ENCODE measurements at regions of chrX and their contacts with region 1.

Region 1: DNA sequence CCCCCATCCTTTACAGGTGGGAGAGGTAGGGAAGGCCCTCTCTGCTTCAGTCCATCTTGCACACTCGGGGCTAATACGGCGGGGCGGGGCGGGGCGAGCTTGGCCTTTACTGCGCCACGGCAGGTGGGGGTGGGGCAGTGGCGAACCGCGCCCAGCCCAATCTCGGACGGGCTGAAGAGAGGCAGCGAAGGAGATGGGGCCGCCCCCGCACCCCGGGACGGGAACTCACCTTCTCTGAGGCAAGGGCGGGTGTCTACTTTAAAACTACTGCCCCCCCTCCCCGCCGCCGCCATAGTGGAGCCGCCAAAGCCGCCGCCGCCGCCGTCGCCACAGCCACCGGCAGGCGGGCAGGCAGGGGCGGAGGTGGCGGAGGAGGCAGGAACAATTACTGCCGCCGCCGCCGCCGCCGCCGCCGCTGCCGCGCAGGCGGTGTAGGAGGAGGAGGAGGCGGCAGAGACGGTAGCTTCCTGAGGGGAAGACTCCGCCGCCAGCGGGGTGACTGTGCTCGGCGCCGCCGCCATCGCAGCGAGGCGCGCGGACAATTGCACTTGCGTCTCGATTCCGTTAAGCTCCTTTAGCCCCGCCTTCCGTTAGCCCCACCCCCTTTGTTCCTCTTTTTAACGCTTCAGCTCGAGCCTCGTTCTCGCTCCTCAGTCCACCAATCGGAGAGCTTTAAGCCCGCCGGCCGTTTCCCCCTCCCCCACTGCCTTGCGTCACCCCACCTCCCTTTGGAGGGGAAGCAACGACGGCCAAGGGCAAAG is at the start of gene ZMAT1:
- H3K4me3 Mint-ChIP-seq: peak within 1 kb of the TSS; percentile 76
- H3K27ac Mint-ChIP-seq: peak within 1 kb of the TSS; percentile 77
- H3K4me1 Mint-ChIP-seq: peaks cover 8% of the 10 kb centered on the region
- H3K27me3 Mint-ChIP-seq: no peaks in the 10 kb centered on the region

Region 2: DNA sequence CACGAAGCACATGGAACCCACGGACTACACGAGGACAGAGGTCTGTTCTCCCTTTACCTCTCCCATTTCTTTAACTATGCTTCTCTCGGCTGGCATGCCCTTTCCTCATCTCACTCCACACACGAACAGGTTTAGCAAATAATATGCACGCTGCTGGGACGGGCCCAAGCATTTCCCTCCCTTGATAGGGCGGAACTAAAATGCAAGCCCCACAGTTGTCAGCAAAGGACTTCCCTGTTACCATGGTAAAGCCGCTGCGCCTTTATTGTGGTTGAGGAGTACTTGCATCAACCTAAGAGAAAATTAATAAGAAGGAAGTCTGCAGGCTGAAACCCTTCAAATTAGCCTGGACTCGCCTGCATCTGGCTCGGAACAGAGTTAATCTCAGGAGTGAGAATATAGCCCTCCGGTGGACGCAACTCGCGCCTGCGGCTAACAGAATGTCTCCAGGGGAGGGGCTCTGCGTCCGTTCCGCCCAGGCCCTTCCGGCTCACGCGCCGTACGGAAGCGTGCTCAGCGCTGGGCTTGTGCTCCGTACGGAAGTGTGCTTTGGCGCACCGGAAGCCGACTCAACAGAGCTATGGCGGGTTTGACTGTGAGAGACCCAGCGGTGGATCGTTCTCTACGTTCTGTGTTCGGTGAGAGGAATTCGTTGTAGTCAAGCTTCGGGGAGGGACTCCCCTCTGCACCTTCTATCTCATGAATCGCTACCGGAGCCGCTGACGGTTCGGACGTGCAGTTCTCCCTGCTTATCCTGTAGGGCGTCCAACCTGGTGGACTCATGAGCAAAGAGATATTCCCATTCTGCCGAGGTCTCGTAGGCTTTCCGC is 1111.6 kb before region 1 on chrX and contains the start of gene CSTF2:
- intact Hi-C with region 1: loop called (anchors 5 kb)
- H3K4me3 Mint-ChIP-seq: peak within 1 kb of the TSS; percentile 81
- H3K27ac Mint-ChIP-seq: peak within 1 kb of the TSS; percentile 85
- H3K4me1 Mint-ChIP-seq: peaks cover 7% of the 10 kb centered on the region
- H3K27me3 Mint-ChIP-seq: peaks cover 6% of the 10 kb centered on the region

Measured in dendritic cell treated with granulocyte-macrophage colony-stimulating factor and Interleukin-4, amounts not matched to agents 40 ng/mL and 50 ng/mL, for 4 days (primary cell).